Activated CD4-positive, alpha-beta T cell treated with anti-CD3 and anti-CD28 coated beads, Interleukin-2, amount 10 ng/mL, durations not matched to agents 24 days and 14 days (primary cell): ENCODE measurements at regions of chr6 and their contacts with region 1.

Region 1: DNA sequence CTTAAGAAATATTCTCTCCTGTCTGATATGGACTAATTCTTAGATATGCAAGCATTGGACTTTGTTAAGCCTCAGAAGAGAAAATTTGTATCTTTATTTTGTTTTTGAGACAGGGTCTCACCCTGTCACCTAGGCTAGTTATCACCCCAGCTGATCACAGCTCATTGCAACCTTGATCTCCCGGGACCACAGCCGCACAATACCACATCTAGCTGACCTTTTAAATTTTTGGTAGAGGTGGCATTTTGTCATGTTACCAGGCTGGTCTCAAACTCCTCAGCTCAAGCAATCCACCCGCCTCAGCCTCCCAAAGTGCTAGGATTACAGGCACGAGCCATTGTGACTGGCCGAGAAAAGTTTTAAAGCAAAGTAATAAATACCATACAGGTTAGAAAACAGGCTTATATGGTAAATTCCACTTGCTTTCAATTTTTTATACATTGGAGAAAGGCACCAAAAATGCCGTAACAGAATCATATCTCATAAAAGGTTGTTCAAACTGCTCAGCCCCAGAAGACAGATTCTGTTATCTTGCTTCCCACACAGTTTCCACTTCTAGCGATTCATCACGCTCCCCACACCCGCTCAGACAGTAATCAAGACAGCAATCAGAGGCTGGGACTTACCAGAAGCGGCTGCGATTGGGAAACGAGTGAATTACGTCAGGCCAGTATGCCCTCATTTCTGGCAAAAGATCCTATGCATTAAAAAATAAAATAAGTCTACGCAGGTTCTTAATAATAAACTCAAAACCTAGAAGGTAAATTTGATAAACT is 13.8 kb downstream of the RNASET2 start:
- DNase-seq: peak; percentile 87
- H3K4me3 Mint-ChIP-seq: peak overlapping the region; percentile 76
- H3K27ac Mint-ChIP-seq: peak overlapping the region; percentile 94
- H3K4me1 Mint-ChIP-seq: peaks cover 39% of the 10 kb centered on the region
- H3K27me3 Mint-ChIP-seq: no peaks in the 10 kb centered on the region

Region 2: GRCh38 chr6:166830185-166830890 is 112.2 kb before region 1 on chr6:
- intact Hi-C with region 1: loop called (anchors 2 kb)
- DNase-seq: no peak
- H3K4me3 Mint-ChIP-seq: no peak overlapping the region
- H3K27ac Mint-ChIP-seq: peak overlapping the region; percentile 26
- H3K4me1 Mint-ChIP-seq: peaks cover 10% of the 10 kb centered on the region
- H3K27me3 Mint-ChIP-seq: no peaks in the 10 kb centered on the region

Region 3: DNA sequence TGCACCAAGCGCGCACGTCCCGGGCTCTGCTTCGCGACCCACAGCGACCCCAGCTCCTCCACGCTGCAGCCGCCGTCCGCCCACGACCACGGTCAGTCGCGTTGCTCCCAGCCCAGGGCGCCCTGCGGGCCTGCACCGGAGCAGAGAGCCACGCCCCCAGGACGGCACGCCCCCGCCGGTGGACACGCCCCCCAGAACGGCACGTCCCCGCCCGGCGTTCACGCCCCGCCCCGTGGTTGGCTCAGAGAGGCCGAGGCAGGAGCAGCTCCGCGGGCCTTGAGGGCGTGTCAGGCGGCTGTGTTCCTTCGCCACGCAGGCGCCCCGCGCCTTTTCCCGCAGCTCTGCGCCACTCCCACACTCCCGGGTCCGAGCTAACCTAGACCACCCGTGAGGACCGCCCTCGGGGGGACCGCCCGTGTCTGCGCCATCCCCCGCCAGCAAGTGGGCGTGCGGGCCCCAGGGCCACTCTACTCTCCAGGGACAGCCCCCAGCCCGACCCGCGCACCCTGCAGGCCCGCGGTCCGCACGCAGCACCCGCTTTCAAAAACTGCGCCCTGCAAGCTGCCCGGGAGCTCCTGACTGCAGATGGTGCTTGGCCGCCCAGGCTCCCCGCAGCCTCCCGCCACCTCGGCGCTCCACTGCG is 14.0 kb after region 1 on chr6 and contains the start of gene RNASET2:
- intact Hi-C with region 1: loop called (anchors 1 kb)
- DNase-seq: peak; percentile 100
- H3K4me3 Mint-ChIP-seq: peak within 1 kb of the TSS; percentile 95
- H3K27ac Mint-ChIP-seq: peak within 1 kb of the TSS; percentile 98
- H3K4me1 Mint-ChIP-seq: peaks cover 65% of the 10 kb centered on the region
- H3K27me3 Mint-ChIP-seq: no peaks in the 10 kb centered on the region
- total RNA-seq, gene RNASET2: 93.3 and 108 TPM in 2 replicates